CD8-positive, alpha-beta memory T cell (primary cell): ENCODE measurements at regions of chr4 and their contacts with region 1.

Region 1: GRCh38 chr4:108018040-108018883 is 28.6 kb downstream of the HADH start:
- DNase-seq: peak; percentile 63 to 84 (median 69)
- H3K4me3 ChIP-seq: no peak overlapping the region
- H3K4me3 Mint-ChIP-seq: no peak overlapping the region
- H3K27ac ChIP-seq: no peak overlapping the region
- H3K27ac Mint-ChIP-seq: peak overlapping the region in 2 of 8 donors; percentile 48 to 50
- H3K4me1 ChIP-seq: no peaks in the 10 kb centered on the region
- H3K4me1 Mint-ChIP-seq: peaks cover 2 to 13% (median 6%) of the 10 kb centered on the region in 3 donors
- H3K27me3 ChIP-seq: no peaks in the 10 kb centered on the region
- H3K27me3 Mint-ChIP-seq: no peaks in the 10 kb centered on the region

Region 2: DNA sequence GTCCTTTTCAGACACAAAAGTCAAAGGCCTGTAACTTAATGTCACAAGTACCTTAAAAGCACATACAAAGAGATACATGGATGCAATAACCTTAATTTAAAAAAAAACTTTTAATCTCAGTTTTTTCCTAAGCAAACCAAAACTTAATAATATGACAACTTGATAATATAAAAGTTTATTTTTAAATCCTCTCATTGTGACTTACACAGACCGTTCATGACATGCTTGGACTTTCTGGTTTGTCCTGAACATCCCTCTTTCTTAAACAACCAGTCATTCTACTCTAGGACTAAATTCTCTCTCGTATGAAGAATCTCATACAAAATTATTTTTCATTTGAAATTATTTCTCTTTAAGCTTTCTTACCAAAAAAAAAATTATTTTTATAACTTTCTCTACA is 130.0 kb before region 1 on chr4:
- CTCF ChIA-PET with region 1: no interaction called
- POLR2A ChIA-PET with region 1: no interaction called
- DNase-seq: no peak
- H3K4me3 ChIP-seq: no peak overlapping the region
- H3K4me3 Mint-ChIP-seq: no peak overlapping the region
- H3K27ac ChIP-seq: no peak overlapping the region
- H3K27ac Mint-ChIP-seq: no peak overlapping the region
- H3K4me1 ChIP-seq: no peaks in the 10 kb centered on the region
- H3K4me1 Mint-ChIP-seq: no peaks in the 10 kb centered on the region
- H3K27me3 ChIP-seq: no peaks in the 10 kb centered on the region
- H3K27me3 Mint-ChIP-seq: peaks cover 0 to 31% of the 10 kb centered on the region in 2 donors

Region 3: DNA sequence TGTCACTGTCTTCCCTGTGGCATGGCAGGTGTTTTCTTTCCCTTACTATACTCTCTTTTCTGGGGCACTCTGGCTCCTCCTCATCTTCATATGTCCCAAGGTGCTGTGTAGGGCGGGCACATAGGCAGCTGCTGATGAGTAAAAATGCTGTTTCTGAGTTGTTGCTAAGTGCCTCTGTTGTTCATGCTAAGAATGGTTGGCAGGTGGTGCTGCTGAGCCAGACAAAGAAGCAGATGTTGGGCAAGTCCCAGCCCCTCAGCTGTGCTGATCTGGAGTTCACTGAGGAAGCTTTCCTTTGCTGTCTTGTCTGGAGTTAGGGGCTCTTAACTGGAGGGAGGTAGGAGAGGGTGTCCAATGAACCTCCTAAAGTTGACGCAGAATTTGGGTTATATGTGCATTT is 12.1 kb after region 1 on chr4:
- CTCF ChIA-PET with region 1: interaction called, 16 read pairs
- POLR2A ChIA-PET with region 1: no interaction called
- DNase-seq: peak; percentile 21 to 81 (median 56)
- H3K4me3 ChIP-seq: no peak overlapping the region
- H3K4me3 Mint-ChIP-seq: peak overlapping the region in 3 of 7 donors; percentile 16 to 47 (median 24)
- H3K27ac ChIP-seq: no peak overlapping the region
- H3K27ac Mint-ChIP-seq: peak overlapping the region; percentile 1 to 90 (median 66)
- H3K4me1 ChIP-seq: peaks cover 48% of the 10 kb centered on the region
- H3K4me1 Mint-ChIP-seq: peaks cover 20 to 27% (median 26%) of the 10 kb centered on the region in 3 donors
- H3K27me3 ChIP-seq: no peaks in the 10 kb centered on the region
- H3K27me3 Mint-ChIP-seq: no peaks in the 10 kb centered on the region

Region 4: GRCh38 chr4:108181704-108182103 is 163.4 kb after region 1 on chr4:
- CTCF ChIA-PET with region 1: interaction called, 11 read pairs
- POLR2A ChIA-PET with region 1: no interaction called
- DNase-seq: peak in 1 of 5 donors; percentile 13
- H3K4me3 ChIP-seq: no peak overlapping the region
- H3K4me3 Mint-ChIP-seq: no peak overlapping the region
- H3K27ac ChIP-seq: no peak overlapping the region
- H3K27ac Mint-ChIP-seq: no peak overlapping the region
- H3K4me1 ChIP-seq: no peaks in the 10 kb centered on the region
- H3K4me1 Mint-ChIP-seq: no peaks in the 10 kb centered on the region
- H3K27me3 ChIP-seq: no peaks in the 10 kb centered on the region
- H3K27me3 Mint-ChIP-seq: peaks cover 8 to 9% of the 10 kb centered on the region in 2 donors